MCF 10A (cell line): ENCODE measurements at regions of chr2 and their contacts with region 1.

Region 1: DNA sequence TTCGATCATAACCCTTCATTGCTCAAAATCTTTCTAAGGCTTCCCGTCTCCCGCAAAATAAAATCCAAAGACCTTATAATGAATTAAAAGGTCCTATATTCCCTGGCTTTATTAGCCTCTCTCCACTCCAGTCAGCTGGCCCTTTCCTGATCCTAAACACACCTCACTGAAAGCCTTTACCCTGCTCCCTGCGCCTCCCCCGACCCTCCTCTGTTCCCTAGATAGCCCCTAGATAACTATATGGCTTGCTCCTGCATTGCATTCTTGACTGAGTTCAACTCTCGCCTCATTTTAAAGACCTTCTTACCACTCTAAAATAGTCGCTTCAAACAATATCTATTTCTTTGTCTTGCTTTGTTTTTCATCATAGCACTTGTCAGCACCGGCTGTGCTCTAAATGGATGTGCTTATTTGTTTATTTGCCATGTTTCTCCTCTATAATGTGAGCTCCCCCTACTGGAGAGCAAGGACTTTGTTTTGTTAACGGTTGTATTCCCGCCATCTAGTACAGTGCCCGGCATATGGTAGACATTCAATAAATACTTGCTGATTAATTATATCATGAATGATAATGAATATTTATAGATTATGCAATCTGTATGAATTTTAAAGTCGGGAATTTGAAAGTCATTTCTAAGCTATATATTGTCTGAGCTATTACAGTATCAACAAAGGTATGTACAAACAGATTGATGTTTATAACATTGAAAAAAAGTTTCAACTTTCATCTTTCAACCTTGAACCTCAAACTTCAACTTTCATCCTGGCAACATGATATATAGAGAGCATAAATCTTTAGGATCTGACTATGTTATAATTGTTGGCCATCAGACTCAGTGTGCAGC is 32.4 kb upstream of the VIT start:
- DNase-seq: peak; percentile 81
- H3K4me3 Mint-ChIP-seq: no peak overlapping the region
- H3K27ac Mint-ChIP-seq: no peak overlapping the region
- H3K4me1 Mint-ChIP-seq: no peaks in the 10 kb centered on the region
- H3K27me3 Mint-ChIP-seq: no peaks in the 10 kb centered on the region
- CTCF ChIP-seq: peak; percentile 64

Region 2: DNA sequence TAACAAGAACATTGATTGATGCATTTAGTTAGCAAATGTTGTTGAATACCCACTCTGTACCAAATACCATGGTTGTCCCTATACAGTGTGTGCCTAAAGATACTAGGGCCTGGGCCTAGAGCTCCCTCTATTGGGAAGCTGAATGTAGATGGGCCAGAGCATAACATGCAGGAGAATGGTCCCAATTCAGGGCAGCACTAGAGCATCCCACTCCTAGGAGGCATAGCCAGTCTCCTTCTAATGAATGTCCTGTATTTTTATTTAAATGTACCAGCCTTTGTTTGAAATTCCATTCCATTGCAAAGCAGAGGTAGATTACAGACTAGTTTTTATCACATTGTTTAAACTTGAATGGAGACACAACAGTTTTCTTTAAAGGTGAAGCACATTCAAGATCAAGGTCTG is 156.7 kb before region 1 on chr2:
- CTCF ChIA-PET with region 1: interaction called, 5 read pairs
- POLR2A ChIA-PET with region 1: interaction called, 3 read pairs
- intact Hi-C with region 1: loop called (anchors 2 kb)
- DNase-seq: peak; percentile 82
- H3K4me3 Mint-ChIP-seq: no peak overlapping the region
- H3K27ac Mint-ChIP-seq: peak overlapping the region; percentile 12
- H3K4me1 Mint-ChIP-seq: no peaks in the 10 kb centered on the region
- H3K27me3 Mint-ChIP-seq: no peaks in the 10 kb centered on the region
- CTCF ChIP-seq: peak; percentile 84

Region 3: GRCh38 chr2:36539631-36540030 is 124.4 kb before region 1 on chr2:
- CTCF ChIA-PET with region 1: interaction called, 20 read pairs
- POLR2A ChIA-PET with region 1: interaction called, 4 read pairs
- intact Hi-C with region 1: no loop called
- DNase-seq: no peak
- H3K4me3 Mint-ChIP-seq: no peak overlapping the region
- H3K27ac Mint-ChIP-seq: no peak overlapping the region
- H3K4me1 Mint-ChIP-seq: no peaks in the 10 kb centered on the region
- H3K27me3 Mint-ChIP-seq: no peaks in the 10 kb centered on the region
- CTCF ChIP-seq: no peak

Region 4: DNA sequence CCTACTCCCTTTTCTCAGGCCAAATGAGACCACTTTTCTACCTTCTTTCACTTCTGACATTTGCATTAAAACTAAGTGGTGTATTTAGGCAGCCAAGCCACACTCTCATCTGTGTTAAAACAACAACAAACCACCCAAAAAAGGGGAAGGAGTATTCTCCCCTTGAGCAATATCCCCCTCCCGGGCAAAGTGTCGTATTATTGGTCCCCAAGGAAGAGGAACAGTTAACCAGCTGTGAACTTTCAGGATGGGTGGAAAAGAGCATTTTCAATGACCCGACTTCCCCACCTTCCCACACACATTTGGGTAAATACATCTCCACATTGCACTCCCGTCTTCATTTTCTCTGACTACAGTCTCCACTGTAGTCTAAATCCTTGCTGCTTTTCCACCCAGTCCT is 110.4 kb before region 1 on chr2:
- CTCF ChIA-PET with region 1: interaction called, 15 read pairs
- POLR2A ChIA-PET with region 1: no interaction called
- intact Hi-C with region 1: loop called (anchors 5 kb)
- DNase-seq: no peak
- H3K4me3 Mint-ChIP-seq: no peak overlapping the region
- H3K27ac Mint-ChIP-seq: no peak overlapping the region
- H3K4me1 Mint-ChIP-seq: no peaks in the 10 kb centered on the region
- H3K27me3 Mint-ChIP-seq: no peaks in the 10 kb centered on the region
- CTCF ChIP-seq: no peak

Region 5: DNA sequence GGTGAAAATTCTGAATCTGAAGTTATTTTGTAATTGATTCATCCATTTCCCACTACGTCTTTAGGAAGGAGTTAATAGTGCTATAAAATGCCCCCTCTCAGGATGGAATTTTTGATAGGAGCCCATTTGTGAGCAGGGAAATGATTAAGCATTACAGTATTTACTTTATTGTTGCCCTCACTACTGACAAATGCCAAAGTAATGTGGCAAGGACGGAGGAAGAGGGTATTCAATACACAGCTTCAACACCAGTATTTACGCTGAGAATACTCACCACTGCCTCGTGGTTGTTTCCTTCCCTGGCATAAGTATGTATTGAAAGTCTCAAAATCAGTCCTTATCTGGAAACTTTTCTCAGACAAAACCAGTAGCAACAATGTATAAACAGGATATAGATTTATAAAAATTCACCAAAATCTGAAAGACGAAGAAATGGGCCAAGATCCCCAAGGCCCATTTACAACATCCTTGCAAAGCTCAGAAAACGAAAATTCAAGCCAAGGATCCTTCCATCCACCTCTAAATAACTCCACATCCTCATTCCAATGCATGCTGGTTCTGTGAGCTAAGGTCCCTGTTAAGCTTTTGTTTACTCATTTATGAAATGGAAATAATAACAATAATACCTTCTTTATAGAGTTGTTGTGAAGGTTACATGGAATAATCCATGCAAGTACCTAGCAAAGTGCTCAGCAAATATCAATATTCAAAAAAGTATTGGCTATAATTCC is 95.4 kb before region 1 on chr2:
- CTCF ChIA-PET with region 1: interaction called, 14 read pairs
- POLR2A ChIA-PET with region 1: interaction called, 3 read pairs
- intact Hi-C with region 1: no loop called
- DNase-seq: peak; percentile 52
- H3K4me3 Mint-ChIP-seq: peak overlapping the region; percentile 57
- H3K27ac Mint-ChIP-seq: peak overlapping the region; percentile 96
- H3K4me1 Mint-ChIP-seq: peaks cover 31% of the 10 kb centered on the region
- H3K27me3 Mint-ChIP-seq: no peaks in the 10 kb centered on the region
- CTCF ChIP-seq: no peak

Region 6: GRCh38 chr2:36650031-36650430 is 14.0 kb before region 1 on chr2:
- CTCF ChIA-PET with region 1: interaction called, 7 read pairs
- POLR2A ChIA-PET with region 1: interaction called, 10 read pairs
- intact Hi-C with region 1: no loop called
- DNase-seq: peak; percentile 93
- H3K4me3 Mint-ChIP-seq: no peak overlapping the region
- H3K27ac Mint-ChIP-seq: peak overlapping the region; percentile 61
- H3K4me1 Mint-ChIP-seq: peaks cover 11% of the 10 kb centered on the region
- H3K27me3 Mint-ChIP-seq: no peaks in the 10 kb centered on the region
- CTCF ChIP-seq: no peak

Region 7: GRCh38 chr2:36711741-36712288 is 47.7 kb after region 1 on chr2:
- CTCF ChIA-PET with region 1: no interaction called
- POLR2A ChIA-PET with region 1: no interaction called
- intact Hi-C with region 1: no loop called
- DNase-seq: no peak
- H3K4me3 Mint-ChIP-seq: no peak overlapping the region
- H3K27ac Mint-ChIP-seq: no peak overlapping the region
- H3K4me1 Mint-ChIP-seq: no peaks in the 10 kb centered on the region
- H3K27me3 Mint-ChIP-seq: no peaks in the 10 kb centered on the region
- CTCF ChIP-seq: no peak

Region 8: GRCh38 chr2:36785179-36785795 is 121.2 kb after region 1 on chr2:
- CTCF ChIA-PET with region 1: interaction called, 11 read pairs
- POLR2A ChIA-PET with region 1: no interaction called
- intact Hi-C with region 1: no loop called
- DNase-seq: peak; percentile 73
- H3K4me3 Mint-ChIP-seq: no peak overlapping the region
- H3K27ac Mint-ChIP-seq: no peak overlapping the region
- H3K4me1 Mint-ChIP-seq: no peaks in the 10 kb centered on the region
- H3K27me3 Mint-ChIP-seq: peaks cover 32% of the 10 kb centered on the region
- CTCF ChIP-seq: peak; percentile 82